PC-9 (cell line): ENCODE measurements at regions of chr17 and their contacts with region 1.

Region 1: GRCh38 chr17:56715613-56716357 is 117.9 kb downstream of the C17orf67 start:
- DNase-seq: peak; percentile 75 to 76
- H3K4me3 ChIP-seq: no peak overlapping the region
- H3K27ac ChIP-seq: no peak overlapping the region
- H3K4me1 ChIP-seq: peaks cover 14% of the 10 kb centered on the region; the same call in 1 of the 2 replicates
- H3K27me3 ChIP-seq: no peaks in the 10 kb centered on the region
- CTCF ChIP-seq: peak; percentile 94

Region 2: GRCh38 chr17:56125830-56126819 is 589.7 kb before region 1 on chr17:
- CTCF ChIA-PET with region 1: no interaction called
- POLR2A ChIA-PET with region 1: no interaction called
- intact Hi-C with region 1: loop called (anchors 10 kb)
- DNase-seq: peak in 1 of 2 experiments; percentile 1
- H3K4me3 ChIP-seq: no peak overlapping the region
- H3K27ac ChIP-seq: no peak overlapping the region
- H3K4me1 ChIP-seq: no peaks in the 10 kb centered on the region
- H3K27me3 ChIP-seq: peaks cover 6% of the 10 kb centered on the region; the same call in 1 of the 2 replicates
- CTCF ChIP-seq: peak; percentile 58

Region 3: DNA sequence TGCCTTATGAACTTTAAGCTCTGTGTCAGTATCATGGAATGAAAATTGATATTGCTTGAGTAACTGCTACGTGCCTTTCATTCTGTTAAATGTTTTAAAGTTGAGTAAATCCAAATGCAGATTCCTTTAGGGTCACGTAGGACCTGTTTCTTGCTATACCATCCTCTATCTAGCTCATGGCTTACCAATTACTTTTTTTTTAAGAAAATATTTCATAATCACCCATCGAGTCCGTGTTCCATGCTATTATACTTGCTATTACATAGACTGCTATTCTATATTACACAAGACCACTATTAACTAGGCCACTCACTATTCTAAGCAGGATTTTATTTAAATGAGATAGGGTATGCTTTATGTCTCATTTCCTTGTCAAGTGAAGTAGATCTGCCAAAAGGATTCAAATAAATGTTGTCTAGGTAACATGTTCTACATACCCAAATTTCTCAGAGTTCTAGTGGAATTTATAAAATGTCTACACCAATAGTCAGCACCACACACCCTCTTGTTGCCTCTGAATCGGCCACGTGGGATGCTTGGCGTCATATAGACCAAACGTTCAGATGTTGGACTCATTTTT is 550.6 kb before region 1 on chr17:
- CTCF ChIA-PET with region 1: no interaction called
- POLR2A ChIA-PET with region 1: interaction called, 13 read pairs
- intact Hi-C with region 1: no loop called
- DNase-seq: no peak
- H3K4me3 ChIP-seq: no peak overlapping the region
- H3K27ac ChIP-seq: no peak overlapping the region
- H3K4me1 ChIP-seq: no peaks in the 10 kb centered on the region
- H3K27me3 ChIP-seq: no peaks in the 10 kb centered on the region
- CTCF ChIP-seq: no peak

Region 4: DNA sequence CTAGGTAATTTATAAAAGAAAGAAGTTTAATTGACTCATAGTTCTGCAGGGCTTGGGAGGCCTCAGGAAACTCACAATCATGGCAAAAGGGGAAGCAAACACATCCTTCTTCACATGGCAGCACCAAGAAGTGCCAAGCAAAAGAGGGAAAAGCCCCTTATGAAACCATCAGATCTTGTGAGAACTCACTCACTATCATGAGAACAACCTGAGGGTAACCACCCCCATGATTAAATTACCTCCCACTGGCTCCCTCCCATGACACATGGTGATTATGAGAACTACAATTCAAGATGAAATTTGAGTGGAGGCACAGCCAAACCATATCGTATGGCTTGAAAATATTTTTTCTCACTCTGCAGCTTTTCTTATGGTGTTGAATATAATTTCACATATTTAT is 410.8 kb before region 1 on chr17:
- CTCF ChIA-PET with region 1: no interaction called
- POLR2A ChIA-PET with region 1: no interaction called
- intact Hi-C with region 1: no loop called
- DNase-seq: no peak
- H3K4me3 ChIP-seq: no peak overlapping the region
- H3K27ac ChIP-seq: no peak overlapping the region
- H3K4me1 ChIP-seq: no peaks in the 10 kb centered on the region
- H3K27me3 ChIP-seq: no peaks in the 10 kb centered on the region; the same call in 1 of the 2 replicates
- CTCF ChIP-seq: no peak

Region 5: GRCh38 chr17:56499799-56500388 is 215.9 kb before region 1 on chr17:
- CTCF ChIA-PET with region 1: interaction called, 11 read pairs
- POLR2A ChIA-PET with region 1: no interaction called
- intact Hi-C with region 1: loop called (anchors 1 kb)
- DNase-seq: peak; percentile 8 to 41
- H3K4me3 ChIP-seq: no peak overlapping the region
- H3K27ac ChIP-seq: no peak overlapping the region
- H3K4me1 ChIP-seq: no peaks in the 10 kb centered on the region
- H3K27me3 ChIP-seq: no peaks in the 10 kb centered on the region
- CTCF ChIP-seq: peak; percentile 82

Region 6: DNA sequence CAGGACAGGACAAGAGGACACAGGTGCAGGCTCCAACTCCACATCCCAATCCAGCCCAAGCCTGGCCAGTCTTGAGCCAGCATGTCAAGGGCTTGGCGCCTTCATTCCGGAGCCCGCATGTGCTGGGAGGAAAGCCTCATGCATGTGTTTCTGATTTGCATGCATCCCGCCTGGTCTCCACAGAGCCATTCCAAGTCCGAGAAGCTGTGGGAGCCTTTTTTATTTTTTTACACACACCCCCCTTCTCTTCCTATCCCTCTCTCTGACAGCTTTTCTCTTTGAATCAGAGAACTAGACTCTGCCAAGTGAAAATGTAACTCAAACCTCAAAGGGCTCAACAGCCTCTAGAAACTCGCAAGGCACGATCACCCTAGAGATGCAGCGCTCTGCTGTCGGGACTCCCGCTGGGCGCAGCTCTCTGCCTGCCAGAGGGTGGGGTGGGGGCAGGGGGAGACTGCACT is 77.2 kb before region 1 on chr17:
- CTCF ChIA-PET with region 1: no interaction called
- POLR2A ChIA-PET with region 1: no interaction called
- intact Hi-C with region 1: no loop called
- DNase-seq: no peak
- H3K4me3 ChIP-seq: no peak overlapping the region
- H3K27ac ChIP-seq: no peak overlapping the region
- H3K4me1 ChIP-seq: peaks cover 21% of the 10 kb centered on the region
- H3K27me3 ChIP-seq: no peaks in the 10 kb centered on the region
- CTCF ChIP-seq: no peak

Region 7: DNA sequence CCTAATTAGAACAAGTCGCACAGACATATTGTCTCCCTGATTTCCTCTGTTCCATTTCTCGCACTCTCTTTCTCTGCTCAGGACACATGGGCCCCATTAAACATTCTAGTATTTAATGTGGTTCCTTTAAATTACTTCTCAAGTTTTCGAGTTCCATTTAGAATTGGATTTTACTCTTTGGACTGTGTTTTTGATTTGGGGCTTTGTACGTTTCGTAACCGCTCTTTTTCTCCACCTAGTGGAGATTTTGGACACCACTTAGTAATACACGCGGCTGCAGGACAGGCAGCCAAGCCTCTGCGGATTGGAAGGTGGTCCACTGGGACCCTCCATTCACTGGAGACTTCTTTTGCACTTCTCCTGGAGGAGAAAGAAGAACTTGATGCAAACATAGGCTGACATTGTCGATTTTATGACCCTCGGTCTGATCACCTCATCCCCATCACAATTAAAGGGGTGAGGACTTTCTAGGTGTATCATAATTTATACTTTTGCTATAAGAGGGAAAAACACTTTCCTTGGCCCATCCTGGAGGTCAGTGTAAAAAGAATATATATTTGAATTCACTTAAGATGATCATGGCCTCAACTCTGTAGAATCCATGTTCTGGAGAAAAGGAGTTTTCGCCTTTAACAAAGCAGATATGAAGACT is 36.5 kb before region 1 on chr17:
- CTCF ChIA-PET with region 1: interaction called, 11 read pairs
- POLR2A ChIA-PET with region 1: no interaction called
- intact Hi-C with region 1: loop called (anchors 1 kb)
- DNase-seq: no peak
- H3K4me3 ChIP-seq: peak overlapping the region; percentile 4; the same call in 1 of the 2 replicates
- H3K27ac ChIP-seq: peak overlapping the region; percentile 96
- H3K4me1 ChIP-seq: peaks cover 100% of the 10 kb centered on the region
- H3K27me3 ChIP-seq: no peaks in the 10 kb centered on the region
- CTCF ChIP-seq: peak; percentile 80

Region 8: GRCh38 chr17:56779898-56780733 is 64.3 kb after region 1 on chr17:
- CTCF ChIA-PET with region 1: interaction called, 8 read pairs
- POLR2A ChIA-PET with region 1: no interaction called
- intact Hi-C with region 1: loop called (anchors 2 kb)
- DNase-seq: peak; percentile 64 to 87
- H3K4me3 ChIP-seq: peak overlapping the region; percentile 66
- H3K27ac ChIP-seq: no peak overlapping the region
- H3K4me1 ChIP-seq: peaks cover 30% of the 10 kb centered on the region
- H3K27me3 ChIP-seq: no peaks in the 10 kb centered on the region
- CTCF ChIP-seq: peak; percentile 99